ENCODE measurements at regions of chr2 and their contacts with region 1.

Region 1: DNA sequence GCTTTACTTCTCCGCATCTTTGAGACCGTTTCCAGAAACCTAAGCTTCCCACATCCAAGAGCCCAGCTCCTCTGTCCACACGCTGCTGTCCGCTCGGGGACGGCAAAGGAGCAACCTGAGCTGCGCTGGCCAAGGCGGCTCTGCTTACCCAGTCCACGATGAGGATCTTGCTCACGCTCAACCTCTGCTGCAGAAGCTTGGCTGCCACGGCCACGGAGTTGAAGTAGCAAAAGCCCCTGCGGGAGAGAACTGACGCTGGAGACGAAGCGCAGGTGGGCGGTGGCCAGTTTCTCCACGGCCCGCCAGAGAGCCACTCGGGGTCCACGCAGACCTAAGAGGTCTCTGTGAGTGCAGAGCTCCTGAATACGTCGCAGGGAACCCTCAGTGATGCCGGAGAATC is 236.1 kb downstream of the TWIST2 start:
- DNase-seq: no peak
- ATAC-seq: no peak
- H3K4me3 ChIP-seq: no peak overlapping the region
- H3K27ac ChIP-seq: no peak overlapping the region
- H3K4me1 ChIP-seq: no peaks in the 10 kb centered on the region
- H3K27me3 ChIP-seq: no peaks in the 10 kb centered on the region
- CTCF ChIP-seq: no peak
- POLR2A ChIP-seq: no peak

Region 2: DNA sequence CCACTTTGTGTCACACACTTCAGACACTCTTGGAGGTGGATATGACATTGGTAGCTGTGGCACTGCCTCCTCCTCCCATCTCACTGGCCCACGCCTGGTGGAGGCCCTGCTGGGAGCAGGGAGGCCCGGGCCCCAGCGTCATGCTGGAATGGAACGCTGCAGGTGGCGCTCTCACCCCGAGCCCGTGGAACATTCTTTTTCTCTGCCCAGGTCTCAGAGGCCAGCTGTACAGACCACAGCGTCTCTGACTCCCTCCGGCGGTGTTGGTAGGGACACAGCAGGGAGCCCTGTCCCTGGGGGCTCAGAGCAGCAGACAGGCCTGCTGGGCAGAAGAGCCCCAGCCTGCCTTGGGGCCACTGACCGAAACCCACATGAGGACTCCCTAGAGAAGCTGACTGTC is 18.0 kb before region 1 on chr2:
- in situ Hi-C with region 1: no loop called
- intact Hi-C with region 1: loop called (anchors 1 kb)
- DNase-seq: no peak
- ATAC-seq: no peak
- H3K4me3 ChIP-seq: no peak overlapping the region
- H3K27ac ChIP-seq: peak overlapping the region; percentile 2 to 54 (median 29)
- H3K4me1 ChIP-seq: no peaks in the 10 kb centered on the region
- H3K27me3 ChIP-seq: no peaks in the 10 kb centered on the region
- CTCF ChIP-seq: no peak
- POLR2A ChIP-seq: no peak